CD8-positive, alpha-beta T cell (primary cell): ENCODE measurements at regions of chr12 and their contacts with region 1.

Region 1: GRCh38 chr12:82685790-82686167 is 927 bp upstream of the TMTC2 start:
- DNase-seq: peak; percentile 81 to 94 (median 91)
- ATAC-seq: peak; percentile 54
- H3K4me3 ChIP-seq: peak overlapping the region; percentile 59 to 88
- H3K4me3 Mint-ChIP-seq: peak overlapping the region; percentile 92
- H3K27ac ChIP-seq: peak overlapping the region; percentile 64 to 76
- H3K27ac Mint-ChIP-seq: peak overlapping the region; percentile 90
- H3K4me1 ChIP-seq: peaks cover 7% of the 10 kb centered on the region
- H3K4me1 Mint-ChIP-seq: peaks cover 15% of the 10 kb centered on the region
- H3K27me3 ChIP-seq: peaks cover 0 to 4% of the 10 kb centered on the region in 2 experiments
- H3K27me3 Mint-ChIP-seq: peaks cover 19% of the 10 kb centered on the region
- CTCF ChIP-seq: peak; percentile 67

Region 2: GRCh38 chr12:82358200-82359114 is 327.3 kb before region 1 on chr12 and contains the starts of genes CCDC59 and METTL25:
- CTCF ChIA-PET with region 1: interaction called, 7 read pairs
- POLR2A ChIA-PET with region 1: interaction called, 18 read pairs
- intact Hi-C with region 1: loop called in 1 of 2 experiments (anchors 10 kb)
- DNase-seq: peak; percentile 98 to 99 (median 98)
- ATAC-seq: peak; percentile 89
- H3K4me3 ChIP-seq: peak within 1 kb of the TSS; percentile 80 to 97
- H3K4me3 Mint-ChIP-seq: peak within 1 kb of the TSS; percentile 93
- H3K27ac ChIP-seq: peak within 1 kb of the TSS; percentile 94 to 98
- H3K27ac Mint-ChIP-seq: peak within 1 kb of the TSS; percentile 99
- H3K4me1 ChIP-seq: peaks cover 32% of the 10 kb centered on the region
- H3K4me1 Mint-ChIP-seq: peaks cover 62% of the 10 kb centered on the region
- H3K27me3 ChIP-seq: no peaks in the 10 kb centered on the region
- H3K27me3 Mint-ChIP-seq: no peaks in the 10 kb centered on the region
- CTCF ChIP-seq: peak; percentile 99
- total RNA-seq, gene CCDC59: 173 to 174 TPM
- total RNA-seq, gene METTL25: 12.1 to 14.5 TPM

Region 3: DNA sequence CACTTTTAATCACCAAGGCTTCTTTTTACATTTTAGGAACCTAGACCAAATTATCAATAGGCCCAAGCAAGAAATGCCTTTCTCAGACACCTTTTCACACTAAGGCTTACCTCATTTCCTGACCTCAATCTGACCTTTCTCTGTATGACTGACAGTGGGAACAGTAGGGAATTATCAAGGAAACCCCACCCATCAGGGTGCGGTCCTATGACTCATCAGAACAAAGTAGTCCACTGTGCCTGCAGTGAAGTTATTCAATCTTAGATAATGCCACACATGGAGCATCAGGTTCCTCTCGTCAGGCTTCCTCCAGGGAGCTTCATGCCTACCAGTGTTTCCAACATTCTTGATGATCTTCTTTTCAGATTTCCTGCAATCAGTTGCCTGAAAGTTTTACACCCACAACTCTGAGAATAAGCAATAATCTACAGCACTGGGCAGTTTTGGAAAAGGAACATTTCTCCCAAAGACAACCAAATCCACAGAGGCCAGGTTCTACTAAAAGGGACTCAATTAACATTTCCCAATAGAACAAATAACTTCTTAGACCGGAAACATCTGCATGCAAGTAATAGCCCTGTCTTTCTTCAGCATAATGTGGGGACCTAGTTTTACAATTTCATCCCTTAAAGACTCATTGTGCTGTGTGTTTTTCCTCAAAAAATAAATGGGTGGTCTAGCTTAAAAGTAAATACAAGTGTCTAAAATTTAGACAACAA is 35.0 kb before region 1 on chr12:
- CTCF ChIA-PET with region 1: no interaction called
- POLR2A ChIA-PET with region 1: no interaction called
- intact Hi-C with region 1: no loop called
- DNase-seq: peak in 3 of 9 experiments; percentile 16 to 24 (median 23)
- ATAC-seq: no peak
- H3K4me3 ChIP-seq: no peak overlapping the region
- H3K4me3 Mint-ChIP-seq: no peak overlapping the region
- H3K27ac ChIP-seq: no peak overlapping the region
- H3K27ac Mint-ChIP-seq: no peak overlapping the region
- H3K4me1 ChIP-seq: no peaks in the 10 kb centered on the region
- H3K4me1 Mint-ChIP-seq: no peaks in the 10 kb centered on the region
- H3K27me3 ChIP-seq: no peaks in the 10 kb centered on the region
- H3K27me3 Mint-ChIP-seq: no peaks in the 10 kb centered on the region
- CTCF ChIP-seq: no peak

Region 4: GRCh38 chr12:82672811-82673495 is 12.8 kb before region 1 on chr12:
- CTCF ChIA-PET with region 1: interaction called, 12 read pairs
- POLR2A ChIA-PET with region 1: interaction called, 6 read pairs
- intact Hi-C with region 1: no loop called
- DNase-seq: no peak
- ATAC-seq: no peak
- H3K4me3 ChIP-seq: no peak overlapping the region
- H3K4me3 Mint-ChIP-seq: no peak overlapping the region
- H3K27ac ChIP-seq: no peak overlapping the region
- H3K27ac Mint-ChIP-seq: no peak overlapping the region
- H3K4me1 ChIP-seq: no peaks in the 10 kb centered on the region
- H3K4me1 Mint-ChIP-seq: no peaks in the 10 kb centered on the region
- H3K27me3 ChIP-seq: no peaks in the 10 kb centered on the region
- H3K27me3 Mint-ChIP-seq: peaks cover 8% of the 10 kb centered on the region
- CTCF ChIP-seq: no peak

Region 5: GRCh38 chr12:82698708-82699564 is 13.2 kb after region 1 on chr12:
- CTCF ChIA-PET with region 1: interaction called, 11 read pairs
- POLR2A ChIA-PET with region 1: interaction called, 3 read pairs
- intact Hi-C with region 1: no loop called
- DNase-seq: no peak
- ATAC-seq: no peak
- H3K4me3 ChIP-seq: no peak overlapping the region
- H3K4me3 Mint-ChIP-seq: no peak overlapping the region
- H3K27ac ChIP-seq: no peak overlapping the region
- H3K27ac Mint-ChIP-seq: no peak overlapping the region
- H3K4me1 ChIP-seq: no peaks in the 10 kb centered on the region
- H3K4me1 Mint-ChIP-seq: no peaks in the 10 kb centered on the region
- H3K27me3 ChIP-seq: no peaks in the 10 kb centered on the region
- H3K27me3 Mint-ChIP-seq: no peaks in the 10 kb centered on the region
- CTCF ChIP-seq: no peak

Region 6: GRCh38 chr12:83689333-83689732 is 1003.6 kb after region 1 on chr12:
- CTCF ChIA-PET with region 1: no interaction called
- POLR2A ChIA-PET with region 1: no interaction called
- intact Hi-C with region 1: no loop called
- DNase-seq: no peak
- ATAC-seq: no peak
- H3K4me3 ChIP-seq: no peak overlapping the region
- H3K4me3 Mint-ChIP-seq: no peak overlapping the region
- H3K27ac ChIP-seq: no peak overlapping the region
- H3K27ac Mint-ChIP-seq: no peak overlapping the region
- H3K4me1 ChIP-seq: no peaks in the 10 kb centered on the region
- H3K4me1 Mint-ChIP-seq: no peaks in the 10 kb centered on the region
- H3K27me3 ChIP-seq: no peaks in the 10 kb centered on the region
- H3K27me3 Mint-ChIP-seq: no peaks in the 10 kb centered on the region
- CTCF ChIP-seq: no peak

Region 7: DNA sequence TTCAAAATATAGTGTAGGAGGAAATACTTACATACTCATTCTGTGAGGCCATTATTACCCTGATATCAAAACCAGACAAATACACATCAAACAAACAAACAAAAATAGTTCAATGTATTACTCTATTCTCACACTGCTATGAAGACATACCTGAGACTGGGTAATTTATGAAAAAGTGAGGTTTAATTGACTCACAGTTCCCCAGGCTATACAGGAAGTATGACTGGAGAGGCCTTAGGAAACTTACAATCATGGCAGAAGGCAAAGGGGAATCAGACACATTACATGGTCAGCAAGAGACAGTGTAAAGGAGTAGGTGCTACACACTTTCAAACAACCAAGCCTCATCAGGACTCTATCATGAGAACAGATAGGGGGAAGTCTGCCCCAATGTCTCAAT is 1024.1 kb after region 1 on chr12:
- CTCF ChIA-PET with region 1: no interaction called
- POLR2A ChIA-PET with region 1: no interaction called
- intact Hi-C with region 1: no loop called
- DNase-seq: no peak
- ATAC-seq: no peak
- H3K4me3 ChIP-seq: no peak overlapping the region
- H3K4me3 Mint-ChIP-seq: no peak overlapping the region
- H3K27ac ChIP-seq: no peak overlapping the region
- H3K27ac Mint-ChIP-seq: no peak overlapping the region
- H3K4me1 ChIP-seq: no peaks in the 10 kb centered on the region
- H3K4me1 Mint-ChIP-seq: no peaks in the 10 kb centered on the region
- H3K27me3 ChIP-seq: no peaks in the 10 kb centered on the region
- H3K27me3 Mint-ChIP-seq: no peaks in the 10 kb centered on the region
- CTCF ChIP-seq: no peak

Region 8: DNA sequence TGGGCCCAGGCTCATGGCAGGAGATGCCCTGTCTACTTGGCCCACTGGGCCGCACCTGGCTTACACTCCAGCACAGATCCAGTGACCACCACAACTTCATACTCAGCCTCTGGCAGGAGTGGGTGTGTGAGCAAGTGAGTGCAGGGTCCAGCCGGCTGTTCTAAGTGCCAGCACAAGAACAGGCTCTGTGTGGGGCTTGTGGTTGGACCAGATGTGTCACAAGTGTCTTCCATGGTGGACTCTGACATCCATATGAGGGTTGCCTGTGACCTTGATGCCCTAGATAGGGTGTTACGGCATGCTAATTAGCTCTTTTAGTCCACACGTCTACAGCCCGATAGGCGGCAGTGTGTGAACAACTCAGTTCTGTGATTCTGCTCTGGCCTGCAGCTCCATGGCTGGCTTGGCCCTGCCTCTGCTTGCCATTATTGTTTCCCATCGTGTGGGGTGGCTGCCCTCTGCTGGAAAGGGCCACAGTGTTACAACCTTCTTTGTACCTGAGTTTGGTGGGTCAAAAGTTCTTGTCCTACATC is 1137.7 kb after region 1 on chr12:
- CTCF ChIA-PET with region 1: interaction called, 8 read pairs
- POLR2A ChIA-PET with region 1: no interaction called
- intact Hi-C with region 1: loop called in 1 of 2 experiments (anchors 2 kb)
- DNase-seq: peak in 1 of 9 experiments; percentile 2
- ATAC-seq: no peak
- H3K4me3 ChIP-seq: no peak overlapping the region
- H3K4me3 Mint-ChIP-seq: no peak overlapping the region
- H3K27ac ChIP-seq: no peak overlapping the region
- H3K27ac Mint-ChIP-seq: no peak overlapping the region
- H3K4me1 ChIP-seq: no peaks in the 10 kb centered on the region
- H3K4me1 Mint-ChIP-seq: no peaks in the 10 kb centered on the region
- H3K27me3 ChIP-seq: no peaks in the 10 kb centered on the region
- H3K27me3 Mint-ChIP-seq: no peaks in the 10 kb centered on the region
- CTCF ChIP-seq: no peak

Region 9: DNA sequence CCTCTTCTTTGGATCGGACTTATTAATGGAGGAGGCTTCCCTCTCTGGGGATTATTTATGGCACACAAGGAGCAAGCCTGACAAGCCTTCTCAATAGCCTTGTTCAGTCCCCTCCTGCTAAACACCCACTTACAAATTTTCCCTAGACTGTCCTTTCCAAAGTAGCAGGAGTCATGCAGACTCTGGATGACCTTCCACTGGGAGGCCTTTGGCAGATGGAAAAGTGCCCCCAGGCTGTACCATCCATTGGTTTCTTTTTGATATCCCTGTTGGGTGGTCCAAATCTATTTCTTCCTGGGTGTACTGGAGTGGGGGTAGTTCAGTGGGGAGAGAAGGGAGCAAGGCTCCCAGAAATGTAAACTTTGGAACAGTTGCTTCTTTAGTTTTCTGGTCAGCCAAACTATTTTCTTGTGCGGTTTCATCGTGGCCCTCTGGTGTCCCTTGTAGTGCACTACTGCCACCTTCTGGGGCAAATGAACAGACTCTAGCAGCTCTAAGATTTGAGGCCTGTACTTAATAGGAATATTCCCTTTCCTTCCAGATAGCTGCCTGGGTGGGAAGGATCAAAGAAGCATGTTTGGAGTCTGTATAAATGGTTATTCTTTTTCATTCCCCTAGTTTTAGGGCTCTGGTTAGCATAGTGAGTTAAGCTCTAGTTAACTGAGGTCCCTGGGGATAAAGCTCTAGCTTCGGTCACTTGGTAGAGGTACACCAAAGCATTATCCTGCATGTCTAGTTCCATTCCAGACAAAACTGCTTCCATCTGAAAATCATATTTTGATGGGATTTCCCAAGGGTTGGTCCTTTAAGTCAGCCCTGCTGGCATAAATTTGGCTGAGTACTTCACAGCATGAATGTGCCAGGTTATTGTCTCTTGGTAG is 1817.4 kb after region 1 on chr12:
- CTCF ChIA-PET with region 1: no interaction called
- POLR2A ChIA-PET with region 1: no interaction called
- intact Hi-C with region 1: loop called in 1 of 2 experiments (anchors 10 kb)
- DNase-seq: peak in 2 of 9 experiments; percentile 2 to 6
- ATAC-seq: no peak
- H3K4me3 ChIP-seq: no peak overlapping the region
- H3K4me3 Mint-ChIP-seq: no peak overlapping the region
- H3K27ac ChIP-seq: no peak overlapping the region
- H3K27ac Mint-ChIP-seq: no peak overlapping the region
- H3K4me1 ChIP-seq: no peaks in the 10 kb centered on the region
- H3K4me1 Mint-ChIP-seq: no peaks in the 10 kb centered on the region
- H3K27me3 ChIP-seq: no peaks in the 10 kb centered on the region
- H3K27me3 Mint-ChIP-seq: no peaks in the 10 kb centered on the region
- CTCF ChIP-seq: no peak